ENCODE measurements at regions of chr10 and their contacts with region 1.

Region 1: DNA sequence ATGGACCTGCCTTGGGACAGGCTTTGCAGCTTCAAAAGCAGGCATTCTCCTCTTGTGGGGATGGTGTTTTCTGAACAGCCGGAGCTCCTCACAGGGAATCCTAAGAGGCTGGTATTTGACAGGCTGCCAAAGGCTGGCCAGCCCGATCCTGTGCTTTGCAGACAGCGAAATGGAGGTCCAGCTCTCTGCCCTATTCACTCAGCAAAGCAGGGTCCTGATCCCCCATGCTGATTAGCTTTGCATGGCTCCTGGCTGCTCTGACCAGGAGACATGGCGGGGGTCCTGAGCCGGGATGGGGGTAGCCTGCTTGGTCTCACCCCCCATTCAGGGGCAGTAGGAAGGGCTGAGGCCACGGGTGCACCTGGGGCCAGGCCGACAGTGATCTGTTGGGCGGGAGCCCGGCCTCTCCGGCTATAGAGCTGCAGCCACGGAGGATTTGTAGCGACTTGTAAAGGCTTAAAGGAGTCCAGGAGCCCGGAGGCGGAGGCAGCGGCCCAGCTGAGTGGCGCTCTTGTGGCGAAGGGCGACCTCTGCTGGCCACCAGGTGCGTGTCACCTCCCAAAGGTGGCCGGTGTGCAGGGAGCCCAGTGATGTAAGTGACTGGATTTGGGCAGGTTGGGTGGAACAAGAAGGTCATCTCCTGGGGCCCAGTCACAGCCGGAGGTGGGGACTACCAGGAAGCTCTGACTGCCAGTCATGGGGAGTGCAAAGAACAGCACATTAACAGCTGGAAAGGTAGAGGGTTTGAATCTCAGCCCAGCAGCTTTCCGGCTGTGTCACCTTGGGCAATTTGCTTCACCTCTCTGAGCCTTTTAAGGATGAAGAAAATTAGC is 126.5 kb downstream of the ZMIZ1 start:
- DNase-seq: peak; percentile 88
- ATAC-seq: peak; percentile 76
- H3K4me3 Mint-ChIP-seq: no peak overlapping the region
- H3K27ac Mint-ChIP-seq: no peak overlapping the region
- H3K4me1 Mint-ChIP-seq: peaks cover 12% of the 10 kb centered on the region
- H3K27me3 Mint-ChIP-seq: no peaks in the 10 kb centered on the region
- CTCF ChIP-seq: peak; percentile 95

Region 2: DNA sequence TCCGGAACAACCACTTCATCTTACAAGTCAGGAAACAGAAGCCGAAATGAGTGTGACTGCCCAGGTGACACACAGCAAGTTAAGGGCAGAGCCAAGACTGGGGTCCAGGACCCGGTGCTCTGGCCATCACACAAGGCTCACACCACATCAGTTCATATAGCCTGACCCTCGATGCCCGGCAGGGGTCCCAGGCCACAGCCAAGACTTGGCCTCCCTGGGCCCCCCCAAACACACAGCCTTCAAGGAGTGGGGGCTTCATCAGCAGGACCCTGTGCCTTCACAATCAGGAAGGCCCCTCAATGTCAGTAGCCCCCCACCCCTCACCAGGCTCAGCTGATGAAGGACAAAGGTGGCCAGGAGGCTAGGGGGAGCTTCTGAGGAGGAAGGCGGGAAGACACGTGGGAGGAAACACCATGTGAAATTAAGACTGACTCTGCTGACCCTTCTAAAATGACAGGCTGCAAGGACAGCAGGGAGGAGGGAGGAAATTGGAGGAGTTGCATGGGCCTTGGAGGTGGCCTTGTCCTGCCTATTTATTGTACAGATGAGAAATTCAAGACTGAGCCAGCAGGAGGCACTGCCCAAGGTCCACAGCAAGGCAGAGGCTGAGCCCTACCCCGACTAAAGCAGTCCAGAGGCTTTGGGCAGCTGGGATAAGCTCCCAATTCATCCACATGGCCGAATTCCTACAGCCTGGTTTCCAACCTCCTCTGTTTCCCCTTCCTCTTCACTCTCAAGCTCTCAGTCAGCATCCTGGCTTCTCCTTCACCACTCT is 342.7 kb before region 1 on chr10:
- CTCF ChIA-PET with region 1: interaction called, 14 read pairs
- POLR2A ChIA-PET with region 1: no interaction called
- DNase-seq: peak; percentile 71
- ATAC-seq: peak; percentile 94
- H3K4me3 Mint-ChIP-seq: no peak overlapping the region
- H3K27ac Mint-ChIP-seq: no peak overlapping the region
- H3K4me1 Mint-ChIP-seq: peaks cover 17% of the 10 kb centered on the region
- H3K27me3 Mint-ChIP-seq: no peaks in the 10 kb centered on the region; the same call in 1 of the 2 replicates
- CTCF ChIP-seq: peak; percentile 42

Region 3: GRCh38 chr10:79073784-79074432 is 121.4 kb before region 1 on chr10:
- CTCF ChIA-PET with region 1: interaction called, 22 read pairs
- POLR2A ChIA-PET with region 1: interaction called, 6 read pairs
- DNase-seq: no peak
- ATAC-seq: no peak
- H3K4me3 Mint-ChIP-seq: no peak overlapping the region
- H3K27ac Mint-ChIP-seq: no peak overlapping the region
- H3K4me1 Mint-ChIP-seq: peaks cover 70% of the 10 kb centered on the region
- H3K27me3 Mint-ChIP-seq: peaks cover 3% of the 10 kb centered on the region; the same call in 1 of the 2 replicates
- CTCF ChIP-seq: no peak

Region 4: DNA sequence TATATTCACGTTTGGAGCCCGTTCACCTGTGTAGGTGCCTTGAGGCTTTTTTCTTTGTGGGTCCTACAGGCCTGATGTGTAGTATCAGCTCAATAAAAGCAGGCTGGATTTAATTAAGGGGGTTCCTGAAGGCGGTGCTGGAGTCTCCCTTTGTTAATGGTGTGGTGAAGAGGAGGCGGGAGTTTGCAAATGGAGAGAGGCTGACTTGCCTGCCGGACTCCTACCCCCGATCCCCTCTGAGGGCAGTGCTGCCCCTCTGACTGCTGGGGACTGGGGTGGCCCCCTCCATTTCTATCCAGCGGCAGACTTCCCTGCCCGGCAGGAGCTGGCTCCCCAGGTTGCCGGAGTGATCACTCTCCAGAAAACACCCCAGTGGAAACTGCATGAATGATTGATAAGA is 81.5 kb before region 1 on chr10:
- CTCF ChIA-PET with region 1: interaction called, 11 read pairs
- POLR2A ChIA-PET with region 1: no interaction called
- DNase-seq: no peak
- ATAC-seq: peak; percentile 57
- H3K4me3 Mint-ChIP-seq: peak overlapping the region; percentile 31
- H3K27ac Mint-ChIP-seq: peak overlapping the region; percentile 74
- H3K4me1 Mint-ChIP-seq: peaks cover 72% of the 10 kb centered on the region
- H3K27me3 Mint-ChIP-seq: no peaks in the 10 kb centered on the region
- CTCF ChIP-seq: no peak

Region 5: GRCh38 chr10:79149662-79150443 is 45.5 kb before region 1 on chr10:
- CTCF ChIA-PET with region 1: interaction called, 24 read pairs
- POLR2A ChIA-PET with region 1: no interaction called
- DNase-seq: peak; percentile 36
- ATAC-seq: peak; percentile 55
- H3K4me3 Mint-ChIP-seq: no peak overlapping the region
- H3K27ac Mint-ChIP-seq: 0 out of 2 replicates have a peak overlapping the region, but pooled peaks have one; percentile 93
- H3K4me1 Mint-ChIP-seq: peaks cover 15% of the 10 kb centered on the region
- H3K27me3 Mint-ChIP-seq: no peaks in the 10 kb centered on the region
- CTCF ChIP-seq: no peak

Region 6: DNA sequence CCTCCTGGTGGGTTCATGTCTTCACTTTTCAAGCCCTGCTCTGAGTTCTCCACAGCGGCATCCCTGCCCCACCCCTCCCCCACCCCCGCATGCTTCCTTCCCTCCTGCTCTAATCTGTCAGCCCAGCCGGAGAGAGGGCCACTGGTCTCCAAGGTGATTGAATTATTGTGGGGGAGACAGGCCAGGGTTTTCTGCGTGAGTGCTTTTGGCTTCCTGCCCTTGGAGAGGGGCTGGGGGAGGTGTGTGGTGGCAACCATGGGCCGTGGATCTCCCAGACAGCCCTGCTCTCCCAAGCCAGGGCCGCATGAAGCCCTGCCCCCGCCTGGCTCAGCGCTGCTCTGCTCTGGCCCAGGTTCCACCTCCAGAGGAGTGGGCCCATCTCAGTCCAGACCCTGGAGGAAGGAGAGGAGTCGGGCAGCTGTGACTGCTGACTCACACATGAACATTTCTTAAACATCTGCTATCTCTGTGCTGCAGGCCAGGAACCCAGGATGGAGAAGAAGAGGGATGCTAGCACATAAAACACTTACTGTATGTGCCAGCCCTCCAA is 16.6 kb before region 1 on chr10:
- CTCF ChIA-PET with region 1: interaction called, 31 read pairs
- POLR2A ChIA-PET with region 1: no interaction called
- DNase-seq: no peak
- ATAC-seq: peak; percentile 50
- H3K4me3 Mint-ChIP-seq: no peak overlapping the region
- H3K27ac Mint-ChIP-seq: no peak overlapping the region
- H3K4me1 Mint-ChIP-seq: peaks cover 27% of the 10 kb centered on the region
- H3K27me3 Mint-ChIP-seq: no peaks in the 10 kb centered on the region
- CTCF ChIP-seq: no peak